Activated CD4-positive, alpha-beta T cell treated with anti-CD3 and anti-CD28 coated beads, Interleukin-2, amount 10 ng/mL, durations not matched to agents 24 days and 14 days (primary cell): ENCODE measurements at regions of chr6 and their contacts with region 1.

Region 1: DNA sequence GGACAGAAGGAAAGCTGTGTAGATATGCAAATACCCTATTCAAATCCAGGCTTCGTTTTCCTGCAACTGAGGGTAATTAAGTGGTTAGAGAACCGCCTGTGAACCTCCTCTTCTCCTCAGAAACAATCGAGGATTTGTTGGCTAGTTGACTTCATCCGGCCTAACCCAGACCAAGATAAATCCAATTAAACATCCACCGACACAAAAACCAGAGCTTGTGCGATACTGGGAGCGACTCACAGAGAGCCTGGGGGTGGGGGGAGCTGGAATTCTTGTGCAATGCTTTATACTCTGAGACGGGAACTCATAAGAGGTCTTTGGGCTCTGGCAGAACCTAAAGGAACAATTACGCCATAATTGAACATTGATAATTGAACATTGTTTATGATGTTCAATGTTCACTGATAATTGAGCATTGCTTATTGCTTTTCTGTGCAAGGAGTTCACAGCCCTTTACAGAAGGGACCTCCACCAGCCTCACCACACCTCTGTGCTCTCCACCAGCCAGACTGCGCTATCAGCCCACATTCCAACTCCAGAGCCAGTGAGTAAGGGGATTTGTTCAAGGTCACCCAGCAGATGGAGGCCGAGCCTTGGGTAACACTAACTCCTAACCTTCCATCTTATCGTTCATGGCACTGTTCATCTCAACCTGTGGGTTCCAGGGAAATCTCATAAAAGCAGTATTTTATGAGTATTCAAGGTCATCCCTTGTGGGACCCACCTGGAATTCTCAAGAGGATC is 429.6 kb upstream of the JARID2 start:
- DNase-seq: no peak
- H3K4me3 Mint-ChIP-seq: no peak overlapping the region
- H3K27ac Mint-ChIP-seq: no peak overlapping the region
- H3K4me1 Mint-ChIP-seq: peaks cover 26% of the 10 kb centered on the region
- H3K27me3 Mint-ChIP-seq: no peaks in the 10 kb centered on the region

Region 2: GRCh38 chr6:14621518-14621917 is 194.8 kb before region 1 on chr6:
- intact Hi-C with region 1: no loop called
- DNase-seq: no peak
- H3K4me3 Mint-ChIP-seq: no peak overlapping the region
- H3K27ac Mint-ChIP-seq: no peak overlapping the region
- H3K4me1 Mint-ChIP-seq: peaks cover 11% of the 10 kb centered on the region
- H3K27me3 Mint-ChIP-seq: peaks cover 4% of the 10 kb centered on the region

Region 3: GRCh38 chr6:14857501-14857900 is 41.2 kb after region 1 on chr6:
- intact Hi-C with region 1: loop called (anchors 1 kb)
- DNase-seq: peak; percentile 82
- H3K4me3 Mint-ChIP-seq: peak overlapping the region; percentile 71
- H3K27ac Mint-ChIP-seq: peak overlapping the region; percentile 98
- H3K4me1 Mint-ChIP-seq: peaks cover 35% of the 10 kb centered on the region
- H3K27me3 Mint-ChIP-seq: no peaks in the 10 kb centered on the region